ENCODE measurements at regions of chr2 and their contacts with region 1.

Region 1: DNA sequence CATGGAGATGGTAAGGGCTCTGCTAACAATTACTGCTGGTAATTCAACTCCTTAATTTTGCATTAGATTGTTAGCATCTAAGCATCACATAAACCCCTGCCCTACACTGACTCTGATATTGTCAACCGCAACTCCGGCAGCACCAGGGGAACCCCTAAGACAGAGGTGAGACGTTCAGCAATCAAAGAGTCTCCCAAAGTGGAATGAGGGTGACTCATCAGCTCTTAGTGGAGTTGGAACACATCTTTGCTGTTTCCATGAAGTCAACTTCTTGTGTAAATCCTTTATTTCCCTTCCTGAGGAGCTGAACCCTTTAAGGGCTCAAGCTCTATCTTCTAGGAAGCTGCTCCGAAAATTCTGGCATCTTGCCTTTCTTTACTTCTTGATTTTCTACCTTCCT is 52.1 kb downstream of the ABCG8 start:
- DNase-seq: no peak
- H3K4me3 ChIP-seq: no peak overlapping the region
- H3K27ac ChIP-seq: no peak overlapping the region
- H3K4me1 ChIP-seq: no peaks in the 10 kb centered on the region
- H3K27me3 ChIP-seq: no peaks in the 10 kb centered on the region
- CTCF ChIP-seq: no peak

Region 2: DNA sequence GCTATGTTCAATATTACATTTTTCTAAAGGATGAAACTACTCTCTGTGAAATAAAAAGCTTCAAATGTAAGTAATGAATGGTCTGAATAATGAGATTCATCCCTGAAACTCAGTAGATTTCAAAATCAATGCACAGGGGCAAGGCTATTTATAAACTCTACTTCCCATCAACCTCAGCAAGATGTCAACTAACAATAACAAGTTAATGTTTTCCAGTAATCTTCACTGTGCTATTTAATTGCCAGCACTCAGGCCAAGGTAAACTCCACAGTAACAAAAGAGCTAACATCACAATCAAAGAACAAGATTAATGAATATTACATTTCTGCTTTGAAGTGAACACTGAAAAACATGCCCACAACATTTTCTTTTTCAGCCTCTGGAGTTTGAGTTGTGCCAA is 520.1 kb before region 1 on chr2:
- intact Hi-C with region 1: no loop called
- DNase-seq: no peak
- H3K4me3 ChIP-seq: no peak overlapping the region
- H3K27ac ChIP-seq: no peak overlapping the region
- H3K4me1 ChIP-seq: peaks cover 0 to 19% (median 13%) of the 10 kb centered on the region in 4 donors
- H3K27me3 ChIP-seq: no peaks in the 10 kb centered on the region
- CTCF ChIP-seq: no peak

Region 3: DNA sequence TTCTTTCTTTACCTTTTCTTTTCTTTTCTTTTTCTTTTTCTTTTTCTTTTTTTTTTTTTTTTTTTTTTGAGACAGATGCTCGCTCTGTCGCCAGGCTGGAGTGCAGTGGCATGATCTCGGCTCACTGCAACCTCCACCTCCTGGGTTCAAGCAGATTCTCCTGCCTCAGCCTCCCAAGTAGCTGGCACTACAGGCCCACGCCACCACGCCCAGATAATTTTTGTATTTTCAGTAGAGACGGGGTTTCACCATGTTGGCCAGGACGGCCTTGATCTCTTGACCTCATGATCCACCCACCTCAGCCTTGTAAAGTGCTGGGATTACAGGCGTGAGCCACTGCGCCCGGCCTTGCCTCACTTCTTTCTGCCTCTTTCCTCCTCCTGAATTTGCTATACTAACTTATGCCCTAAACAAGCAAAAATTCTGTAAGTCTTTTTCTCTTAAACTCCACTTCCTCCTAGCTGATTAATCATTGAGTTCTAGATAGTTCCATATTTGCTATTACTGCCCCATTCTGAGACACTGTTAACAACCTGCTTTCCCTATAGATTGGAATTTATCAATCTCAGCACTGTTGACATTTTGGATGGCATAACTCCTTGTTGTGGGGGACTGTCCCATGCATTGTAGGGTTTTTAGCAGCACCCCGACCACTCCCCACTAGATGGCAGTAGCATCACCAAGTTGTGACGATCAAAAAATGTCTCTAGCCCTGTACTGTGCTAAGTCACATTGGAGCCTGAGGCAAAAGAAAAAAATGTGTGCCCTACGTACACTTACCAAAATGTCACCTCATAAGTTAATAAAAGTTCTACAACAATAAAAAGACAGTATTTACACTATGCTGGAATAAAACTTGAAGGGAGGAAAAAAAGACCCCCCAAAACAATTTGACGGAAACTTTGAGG is 278.6 kb before region 1 on chr2:
- intact Hi-C with region 1: loop called (anchors 10 kb)
- DNase-seq: peak; percentile 73 to 76
- H3K4me3 ChIP-seq: no peak overlapping the region
- H3K27ac ChIP-seq: no peak overlapping the region
- H3K4me1 ChIP-seq: peaks cover 0 to 10% (median 0%) of the 10 kb centered on the region in 4 donors
- H3K27me3 ChIP-seq: no peaks in the 10 kb centered on the region
- CTCF ChIP-seq: peak; percentile 72 to 75

Region 4: DNA sequence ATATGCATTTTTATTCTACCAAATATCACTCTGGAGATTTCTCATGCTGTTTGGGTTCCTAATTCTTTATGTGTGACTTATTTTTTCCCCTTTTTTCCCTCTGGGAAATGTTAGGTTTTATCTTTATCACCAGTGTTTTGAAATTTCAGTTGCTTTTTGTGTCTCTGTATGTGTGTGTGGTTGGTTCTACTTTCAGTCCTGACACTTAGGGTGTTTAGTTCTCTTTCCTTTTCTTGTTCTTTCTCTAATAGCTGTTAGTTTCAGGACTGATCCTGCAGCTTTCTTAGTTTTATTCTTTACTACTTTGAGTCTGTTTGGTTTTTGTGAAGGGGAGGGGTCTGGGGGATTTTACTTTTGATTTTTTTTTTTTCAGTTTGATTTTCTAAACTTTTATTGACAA is 300.9 kb after region 1 on chr2:
- intact Hi-C with region 1: loop called (anchors 5 kb)
- DNase-seq: no peak
- H3K4me3 ChIP-seq: no peak overlapping the region
- H3K27ac ChIP-seq: no peak overlapping the region
- H3K4me1 ChIP-seq: peaks cover 0 to 45% (median 8%) of the 10 kb centered on the region in 4 donors
- H3K27me3 ChIP-seq: no peaks in the 10 kb centered on the region
- CTCF ChIP-seq: no peak

Measured in tibial artery (tissue), 4 donors.